CD8-positive, alpha-beta T cell (primary cell): ENCODE measurements at regions of chr4 and their contacts with region 1.

Region 1: GRCh38 chr4:10403633-10404445 is 53.4 kb downstream of the ZNF518B start:
- DNase-seq: peak in 2 of 9 experiments; percentile 29 to 43
- ATAC-seq: no peak
- H3K4me3 ChIP-seq: no peak overlapping the region
- H3K4me3 Mint-ChIP-seq: no peak overlapping the region
- H3K27ac ChIP-seq: no peak overlapping the region
- H3K27ac Mint-ChIP-seq: no peak overlapping the region
- H3K4me1 ChIP-seq: no peaks in the 10 kb centered on the region
- H3K4me1 Mint-ChIP-seq: no peaks in the 10 kb centered on the region
- H3K27me3 ChIP-seq: no peaks in the 10 kb centered on the region
- H3K27me3 Mint-ChIP-seq: no peaks in the 10 kb centered on the region
- CTCF ChIP-seq: peak; percentile 33

Region 2: GRCh38 chr4:9762823-9763475 is 640.9 kb before region 1 on chr4:
- CTCF ChIA-PET with region 1: interaction called, 5 read pairs
- POLR2A ChIA-PET with region 1: no interaction called
- intact Hi-C with region 1: loop called in 1 of 2 experiments (anchors 10 kb)
- DNase-seq: peak in 4 of 9 experiments; percentile 12 to 54 (median 32)
- ATAC-seq: no peak
- H3K4me3 ChIP-seq: no peak overlapping the region
- H3K4me3 Mint-ChIP-seq: no peak overlapping the region
- H3K27ac ChIP-seq: no peak overlapping the region
- H3K27ac Mint-ChIP-seq: no peak overlapping the region
- H3K4me1 ChIP-seq: no peaks in the 10 kb centered on the region
- H3K4me1 Mint-ChIP-seq: no peaks in the 10 kb centered on the region
- H3K27me3 ChIP-seq: no peaks in the 10 kb centered on the region
- H3K27me3 Mint-ChIP-seq: peaks cover 8% of the 10 kb centered on the region
- CTCF ChIP-seq: no peak

Region 3: DNA sequence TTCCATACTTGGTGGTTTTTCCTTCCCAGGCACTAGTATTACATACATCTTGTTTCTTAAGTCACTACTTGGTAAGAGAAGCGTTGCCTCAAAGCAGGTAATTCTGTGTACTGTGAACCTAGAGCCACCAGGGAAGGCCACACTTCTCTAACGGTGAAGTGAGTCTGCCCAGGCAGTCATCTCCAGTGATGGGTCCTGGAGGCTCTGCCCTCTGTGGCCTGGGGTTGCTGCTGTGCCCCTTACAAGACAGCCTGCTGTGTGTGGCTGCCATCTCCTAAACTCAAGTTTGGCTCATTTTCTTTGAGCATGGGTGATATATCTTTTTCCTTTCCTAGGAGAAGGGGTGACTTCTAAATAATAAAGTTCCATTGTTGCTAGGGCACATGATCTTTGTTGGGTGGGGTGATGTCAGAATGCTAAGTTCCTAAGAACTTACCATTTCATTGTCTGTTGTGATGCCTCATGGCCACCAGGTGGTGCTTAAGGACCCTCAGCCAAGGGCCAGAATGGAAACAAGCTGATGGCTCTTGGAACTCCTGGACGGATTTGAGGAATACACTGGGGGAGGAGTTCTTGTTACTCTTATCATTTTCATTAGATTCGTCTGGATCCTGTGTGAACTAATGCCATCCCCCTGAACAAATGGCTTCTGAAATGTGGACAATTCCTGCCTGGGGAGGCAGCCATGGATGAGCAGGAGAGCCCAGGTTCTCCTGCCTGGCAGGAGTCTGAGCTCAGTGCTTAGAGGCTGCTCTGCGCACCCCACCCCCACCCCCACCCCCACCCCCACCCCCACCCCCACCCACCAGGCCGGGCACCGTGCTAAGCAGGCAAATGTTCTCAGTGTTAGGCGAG is 246.1 kb before region 1 on chr4:
- CTCF ChIA-PET with region 1: interaction called, 9 read pairs
- POLR2A ChIA-PET with region 1: no interaction called
- intact Hi-C with region 1: loop called (anchors 2 to 5 kb)
- DNase-seq: peak in 7 of 9 experiments; percentile 14 to 65 (median 27)
- ATAC-seq: peak; percentile 48
- H3K4me3 ChIP-seq: no peak overlapping the region
- H3K4me3 Mint-ChIP-seq: no peak overlapping the region
- H3K27ac ChIP-seq: no peak overlapping the region
- H3K27ac Mint-ChIP-seq: peak overlapping the region; percentile 55
- H3K4me1 ChIP-seq: peaks cover 43% of the 10 kb centered on the region
- H3K4me1 Mint-ChIP-seq: peaks cover 43% of the 10 kb centered on the region
- H3K27me3 ChIP-seq: no peaks in the 10 kb centered on the region
- H3K27me3 Mint-ChIP-seq: no peaks in the 10 kb centered on the region
- CTCF ChIP-seq: peak; percentile 54

Region 4: GRCh38 chr4:10384974-10385373 is 18.9 kb before region 1 on chr4:
- CTCF ChIA-PET with region 1: interaction called, 5 read pairs
- POLR2A ChIA-PET with region 1: no interaction called
- intact Hi-C with region 1: loop called (anchors 1 kb)
- DNase-seq: no peak
- ATAC-seq: no peak
- H3K4me3 ChIP-seq: no peak overlapping the region
- H3K4me3 Mint-ChIP-seq: no peak overlapping the region
- H3K27ac ChIP-seq: no peak overlapping the region
- H3K27ac Mint-ChIP-seq: no peak overlapping the region
- H3K4me1 ChIP-seq: no peaks in the 10 kb centered on the region
- H3K4me1 Mint-ChIP-seq: no peaks in the 10 kb centered on the region
- H3K27me3 ChIP-seq: no peaks in the 10 kb centered on the region
- H3K27me3 Mint-ChIP-seq: no peaks in the 10 kb centered on the region
- CTCF ChIP-seq: no peak

Region 5: GRCh38 chr4:10893395-10893794 is 489.6 kb after region 1 on chr4:
- CTCF ChIA-PET with region 1: no interaction called
- POLR2A ChIA-PET with region 1: no interaction called
- intact Hi-C with region 1: no loop called
- DNase-seq: peak in 1 of 9 experiments; percentile 10
- ATAC-seq: no peak
- H3K4me3 ChIP-seq: no peak overlapping the region
- H3K4me3 Mint-ChIP-seq: no peak overlapping the region
- H3K27ac ChIP-seq: no peak overlapping the region
- H3K27ac Mint-ChIP-seq: no peak overlapping the region
- H3K4me1 ChIP-seq: no peaks in the 10 kb centered on the region
- H3K4me1 Mint-ChIP-seq: no peaks in the 10 kb centered on the region
- H3K27me3 ChIP-seq: no peaks in the 10 kb centered on the region
- H3K27me3 Mint-ChIP-seq: no peaks in the 10 kb centered on the region
- CTCF ChIP-seq: no peak